Naive thymus-derived CD4-positive, alpha-beta T cell (primary cell): ENCODE measurements at regions of chr4 and their contacts with region 1.

Region 1: DNA sequence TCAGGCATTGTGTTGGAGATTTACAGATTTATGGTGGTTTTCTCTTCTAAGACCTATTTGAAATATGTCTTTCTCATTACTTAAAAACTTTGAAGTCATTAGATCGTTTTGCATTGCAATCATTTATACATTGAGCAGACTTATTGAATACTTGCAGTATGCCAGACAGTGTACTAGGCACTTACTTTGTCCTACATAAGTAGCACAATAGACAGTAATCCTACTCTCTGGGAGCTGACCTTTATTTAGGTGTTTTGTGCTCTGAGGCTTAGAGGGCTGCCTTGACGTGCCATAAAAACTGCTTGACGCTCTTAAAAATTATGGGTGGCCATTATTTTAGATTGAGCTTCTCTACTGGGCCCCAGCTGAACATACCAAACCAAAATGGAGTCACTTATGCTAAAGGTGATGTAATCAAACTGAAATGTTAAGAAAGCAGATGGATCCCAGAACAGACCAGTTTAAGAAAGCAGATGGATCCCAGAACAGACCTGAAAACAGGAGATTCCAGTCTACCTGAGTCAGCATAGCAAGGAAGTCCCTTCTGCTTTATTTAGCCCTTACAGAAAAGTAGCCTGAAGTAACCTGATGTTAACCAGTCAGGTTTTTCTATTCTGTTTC is 42.4 kb downstream of the PTTG2 start:
- DNase-seq: no peak
- ATAC-seq: peak; percentile 15
- H3K4me3 ChIP-seq: no peak overlapping the region
- H3K4me3 Mint-ChIP-seq: no peak overlapping the region
- H3K27ac ChIP-seq: no peak overlapping the region
- H3K27ac Mint-ChIP-seq: peak overlapping the region in 1 of 9 donors; percentile 31
- H3K4me1 ChIP-seq: peaks cover 5 to 14% of the 10 kb centered on the region in 2 donors
- H3K4me1 Mint-ChIP-seq: peaks cover 27 to 68% (median 48%) of the 10 kb centered on the region in 7 donors
- H3K27me3 ChIP-seq: no peaks in the 10 kb centered on the region
- H3K27me3 Mint-ChIP-seq: no peaks in the 10 kb centered on the region

Region 2: DNA sequence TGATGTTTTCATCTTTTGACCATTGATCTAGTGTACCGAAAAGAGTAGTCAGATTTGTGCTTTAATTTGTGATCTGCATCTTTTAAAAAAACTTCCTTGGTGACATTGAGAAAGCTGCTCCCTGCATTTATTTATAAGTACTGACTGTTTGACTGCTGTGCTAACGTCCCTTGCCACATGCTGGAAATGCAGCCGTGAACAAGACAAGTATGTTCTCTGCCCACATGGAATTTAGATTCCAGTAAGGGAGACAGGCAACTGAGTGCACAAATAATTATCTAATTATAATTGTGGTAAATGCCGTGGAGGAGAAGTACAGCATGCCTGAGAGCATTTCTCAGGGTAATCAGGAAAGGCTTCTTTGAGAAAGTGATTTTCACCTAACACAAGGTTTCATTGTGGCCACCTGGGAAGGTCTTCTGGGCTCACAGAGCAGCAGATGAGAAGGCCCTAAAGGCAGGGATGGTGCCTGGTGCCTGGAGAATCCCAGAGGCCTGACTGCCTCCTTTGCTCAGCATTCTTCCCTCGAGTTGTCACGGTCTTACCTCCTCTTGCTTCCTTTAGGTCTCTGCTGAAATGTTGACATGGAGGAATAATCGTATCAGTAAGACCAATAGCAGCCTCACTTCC is 13.4 kb after region 1 on chr4:
- CTCF ChIA-PET with region 1: interaction called, 3 read pairs
- POLR2A ChIA-PET with region 1: no interaction called
- intact Hi-C with region 1: loop called in 1 of 2 experiments (anchors 2 kb)
- DNase-seq: no peak
- ATAC-seq: no peak
- H3K4me3 ChIP-seq: no peak overlapping the region
- H3K4me3 Mint-ChIP-seq: no peak overlapping the region
- H3K27ac ChIP-seq: no peak overlapping the region
- H3K27ac Mint-ChIP-seq: no peak overlapping the region
- H3K4me1 ChIP-seq: no peaks in the 10 kb centered on the region
- H3K4me1 Mint-ChIP-seq: peaks cover 0 to 9% (median 3%) of the 10 kb centered on the region in 7 donors
- H3K27me3 ChIP-seq: no peaks in the 10 kb centered on the region
- H3K27me3 Mint-ChIP-seq: no peaks in the 10 kb centered on the region